ENCODE measurements at regions of chr1 and their contacts with region 1.

Region 1: DNA sequence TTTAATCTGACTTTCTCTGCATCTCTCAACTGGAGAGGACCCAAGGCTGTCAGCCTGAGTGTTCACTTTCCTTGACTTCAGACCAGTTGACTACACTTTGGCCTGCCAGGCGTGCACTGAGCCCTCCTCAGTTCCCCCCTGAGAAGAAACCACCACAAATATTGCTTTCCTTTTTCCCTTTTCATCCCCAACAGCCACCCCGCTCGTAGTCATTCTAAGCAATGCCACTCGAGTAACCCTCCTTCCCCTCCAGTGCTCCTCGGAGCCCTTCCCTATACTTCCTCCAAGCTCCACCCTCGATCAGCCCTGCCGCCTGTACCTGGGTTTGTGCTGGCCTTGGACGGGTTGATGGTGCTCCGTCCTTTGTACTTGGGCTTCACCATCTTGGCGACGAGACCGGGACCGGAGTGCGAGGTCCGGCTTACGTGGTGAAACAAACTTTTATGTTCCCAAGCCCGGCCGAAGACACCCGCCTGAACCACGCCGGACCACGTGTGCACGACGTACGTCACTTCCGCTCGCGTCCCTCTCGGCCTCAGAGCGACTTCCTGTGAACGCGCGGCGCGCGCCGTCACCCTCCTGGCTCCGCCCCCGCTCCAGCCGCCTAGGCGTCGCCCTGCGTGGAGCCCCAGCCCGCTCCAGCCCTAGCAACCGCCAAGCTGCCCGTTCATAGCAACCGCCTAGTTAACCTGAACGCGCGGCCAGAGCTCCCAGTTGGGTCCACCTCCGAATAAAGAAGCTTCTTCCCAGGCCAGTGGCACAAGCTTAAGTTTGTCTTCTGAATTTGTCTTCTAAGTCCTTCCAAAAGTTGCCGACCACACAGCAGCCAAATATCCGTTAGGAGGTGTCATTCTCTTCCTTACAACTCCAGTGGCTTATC is at the start of gene GNL2:
- DNase-seq: peak; percentile 98
- total RNA-seq, gene GNL2: 24.1 TPM

Region 2: DNA sequence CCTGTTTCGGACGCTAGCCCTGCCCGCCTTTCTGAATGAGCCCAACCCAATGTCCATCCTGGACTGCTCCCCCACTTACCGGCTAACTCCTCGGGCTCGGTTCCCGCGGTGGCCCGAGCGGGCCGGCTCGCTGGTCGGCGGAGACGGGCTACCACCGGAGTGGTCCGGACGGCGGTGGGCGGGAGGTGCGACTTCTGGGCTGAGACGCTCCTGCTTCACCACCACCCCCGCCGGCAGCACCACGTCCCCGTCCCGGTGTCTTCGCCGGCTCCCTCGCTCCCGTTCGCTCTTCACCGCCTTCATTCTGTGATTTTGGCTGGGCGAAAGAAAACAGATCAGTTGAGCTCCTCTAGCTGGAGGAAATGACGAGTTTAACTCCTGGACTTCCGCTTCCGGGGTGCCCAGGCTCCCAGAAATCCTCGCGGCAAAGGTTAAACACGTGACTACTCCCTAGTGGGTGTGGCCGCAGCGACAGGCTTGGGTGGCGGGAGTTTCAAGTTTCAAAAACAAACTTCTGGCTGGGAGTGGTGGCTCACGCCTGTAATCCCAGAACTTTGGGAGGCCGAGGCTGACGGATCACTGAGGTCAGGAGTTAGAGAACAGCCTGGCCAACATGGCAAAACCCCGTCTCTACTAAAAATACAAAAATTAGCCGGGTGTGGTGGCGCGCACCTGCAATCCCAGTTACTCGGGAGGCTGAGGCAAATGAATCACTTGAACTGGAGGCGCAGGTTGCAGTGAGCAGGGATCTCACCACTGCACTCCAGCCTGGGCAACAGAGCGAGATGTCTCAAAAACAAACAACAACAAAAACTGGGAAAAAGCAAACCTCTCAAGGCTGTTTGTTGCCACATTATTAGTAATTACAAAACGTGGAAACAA is 41.5 kb before region 1 on chr1 and contains the start of gene SNIP1:
- intact Hi-C with region 1: loop called (anchors 1 kb)
- DNase-seq: peak; percentile 97
- total RNA-seq, gene SNIP1: 10.5 TPM

Region 3: DNA sequence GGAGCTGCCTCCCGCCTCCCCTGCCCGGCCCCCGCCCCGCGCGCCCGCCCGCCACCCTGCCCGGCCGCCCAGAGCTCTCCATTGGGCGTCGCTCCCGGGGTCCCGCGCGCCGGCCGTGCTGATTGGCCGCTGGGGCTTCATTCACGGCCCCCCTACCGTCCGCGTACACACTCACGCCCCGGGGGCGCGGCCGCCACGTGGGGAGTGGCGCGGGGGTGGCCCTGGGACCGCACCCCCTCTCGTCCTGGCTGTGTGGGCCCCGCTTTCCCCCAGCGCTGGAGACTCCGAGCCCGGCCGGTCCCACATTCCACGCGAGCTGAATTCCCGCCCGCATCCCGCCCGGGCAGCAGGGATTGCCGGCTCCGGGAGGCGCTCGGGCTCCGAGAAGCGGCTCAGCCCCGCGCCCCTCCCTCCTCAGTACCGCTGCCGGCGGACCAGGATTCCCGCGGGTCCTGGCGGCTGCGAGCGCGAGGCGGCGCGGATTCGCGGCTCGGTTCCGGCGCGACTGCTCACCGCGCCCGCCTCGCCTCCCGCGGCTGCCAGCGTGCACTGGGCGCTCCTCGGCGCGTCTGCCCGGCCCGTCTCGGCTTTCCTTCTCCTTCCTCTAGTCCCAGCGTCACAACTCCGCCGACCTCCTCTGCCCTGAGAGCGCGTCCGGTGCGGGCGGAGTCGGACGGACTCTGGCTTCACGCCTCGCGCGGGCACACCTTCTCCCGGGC is 451.4 kb after region 1 on chr1:
- intact Hi-C with region 1: loop called (anchors 5 kb)
- DNase-seq: peak; percentile 91

Measured in cardiac septum (tissue), 1 donor.